Mammary epithelial cell (primary cell): ENCODE measurements at regions of chr11 and their contacts with region 1.

Region 1: GRCh38 chr11:118359295-118359958 is at the start of gene UBE4A:
- DNase-seq: peak; percentile 83
- H3K4me3 ChIP-seq: peak within 1 kb of the TSS; percentile 81 to 98 (median 86)
- H3K27ac ChIP-seq: peak within 1 kb of the TSS; percentile 71
- H3K4me1 ChIP-seq: peaks cover 9% of the 10 kb centered on the region
- H3K27me3 ChIP-seq: no peaks in the 10 kb centered on the region
- CTCF ChIP-seq: no peak
- total RNA-seq, gene UBE4A: 31.9 to 54.3 TPM

Region 2: DNA sequence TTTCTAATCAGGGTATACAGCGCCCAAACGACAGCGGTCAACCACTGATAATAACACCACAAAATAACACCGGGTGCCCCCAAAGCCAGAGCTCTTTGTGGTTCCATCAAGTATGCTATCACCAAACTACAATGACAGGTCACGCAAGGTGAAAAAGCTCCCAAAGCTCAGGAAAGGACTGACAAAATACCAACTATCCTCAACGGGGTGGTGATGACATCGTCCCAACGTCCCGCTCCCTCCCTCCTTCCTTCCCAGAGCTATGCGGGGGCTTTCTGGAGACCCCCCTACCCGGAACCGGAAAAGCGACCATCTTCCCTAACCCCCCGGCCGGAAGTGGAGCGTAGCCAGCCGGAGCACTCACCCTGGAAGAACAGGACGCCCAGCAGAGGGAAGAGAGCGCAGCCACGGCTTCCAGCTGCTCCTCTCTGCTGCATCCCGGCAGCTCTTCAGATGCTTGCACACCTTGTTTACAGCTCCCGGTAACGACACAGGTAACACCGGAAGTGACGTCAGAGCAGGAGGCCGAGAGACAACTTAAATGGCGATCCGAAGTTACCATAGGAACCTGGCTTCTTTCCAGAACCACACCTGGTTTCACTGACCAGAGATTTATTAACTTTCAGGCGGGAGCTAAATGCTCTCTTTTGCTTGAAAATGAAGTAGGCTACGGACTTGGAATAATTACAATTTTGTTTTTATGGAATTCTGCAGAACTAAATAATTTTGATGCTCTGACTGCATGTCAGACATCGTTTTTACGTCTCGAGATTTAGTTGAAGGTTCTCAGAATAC is 107.4 kb before region 1 on chr11 and contains the start of gene MPZL3:
- CTCF ChIA-PET with region 1: no interaction called
- dilution Hi-C with region 1: no loop called
- in situ Hi-C with region 1: no loop called
- intact Hi-C with region 1: loop called (anchors 10 kb)
- DNase-seq: peak; percentile 98
- H3K4me3 ChIP-seq: peak within 1 kb of the TSS; percentile 58 to 81 (median 64)
- H3K27ac ChIP-seq: peak within 1 kb of the TSS; percentile 96
- H3K4me1 ChIP-seq: no peaks in the 10 kb centered on the region
- H3K27me3 ChIP-seq: no peaks in the 10 kb centered on the region
- CTCF ChIP-seq: peak in 1 of 2 donors; percentile 22
- total RNA-seq, gene MPZL3: 10.9 to 25.7 TPM

Region 3: DNA sequence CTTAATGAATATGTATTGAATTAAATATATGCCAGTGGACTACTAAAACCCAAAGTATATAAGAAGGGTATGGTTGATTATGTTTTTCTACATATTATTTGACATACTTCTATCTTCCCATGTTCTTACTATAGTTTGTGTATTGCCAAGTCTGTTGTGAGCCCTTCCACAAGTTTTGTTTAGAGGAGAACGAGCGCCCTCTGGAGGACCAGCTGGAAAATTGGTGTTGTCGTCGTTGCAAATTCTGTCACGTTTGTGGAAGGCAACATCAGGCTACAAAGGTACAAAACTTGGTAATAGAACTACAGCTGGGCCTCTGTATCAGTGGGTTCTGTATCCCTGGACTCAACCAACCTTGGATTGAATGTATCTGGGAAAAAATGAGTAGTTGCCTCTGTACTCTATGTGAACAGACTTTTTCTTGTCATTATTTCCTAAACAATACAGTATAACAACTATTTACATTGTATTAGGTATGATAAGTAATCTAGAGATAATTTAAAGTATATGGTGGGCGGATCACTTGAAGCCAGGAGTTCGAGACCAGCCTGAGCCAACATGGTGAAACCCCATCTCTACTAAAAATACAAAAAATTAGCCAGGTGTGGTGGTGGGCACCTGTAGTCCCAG is 129.2 kb after region 1 on chr11:
- CTCF ChIA-PET with region 1: no interaction called
- dilution Hi-C with region 1: no loop called
- in situ Hi-C with region 1: no loop called
- intact Hi-C with region 1: no loop called
- DNase-seq: peak; percentile 47
- H3K4me3 ChIP-seq: no peak overlapping the region
- H3K27ac ChIP-seq: no peak overlapping the region
- H3K4me1 ChIP-seq: no peaks in the 10 kb centered on the region
- H3K27me3 ChIP-seq: no peaks in the 10 kb centered on the region
- CTCF ChIP-seq: peak; percentile 83 to 91

Region 4: GRCh38 chr11:118634431-118635236 is 275.2 kb after region 1 on chr11:
- CTCF ChIA-PET with region 1: no interaction called
- dilution Hi-C with region 1: no loop called
- in situ Hi-C with region 1: no loop called
- intact Hi-C with region 1: no loop called
- DNase-seq: peak; percentile 62
- H3K4me3 ChIP-seq: peak overlapping the region in 1 of 3 experiments; percentile 13
- H3K27ac ChIP-seq: peak overlapping the region; percentile 32
- H3K4me1 ChIP-seq: peaks cover 35% of the 10 kb centered on the region
- H3K27me3 ChIP-seq: no peaks in the 10 kb centered on the region
- CTCF ChIP-seq: peak in 1 of 2 donors; percentile 33